Sigmoid colon (tissue), 7 donors: ENCODE measurements at regions of chr13 and their contacts with region 1.

Region 1: GRCh38 chr13:49792550-49793324 is at the start of gene KPNA3:
- DNase-seq: peak; percentile 98
- H3K4me3 ChIP-seq: peak within 1 kb of the TSS; percentile 63 to 100 (median 94)
- H3K27ac ChIP-seq: peak within 1 kb of the TSS; percentile 92 to 99 (median 97)
- H3K4me1 ChIP-seq: peaks cover 0 to 36% (median 31%) of the 10 kb centered on the region in 4 donors
- H3K27me3 ChIP-seq: no peaks in the 10 kb centered on the region
- CTCF ChIP-seq: no peak
- EP300 ChIP-seq: no peak
- POLR2A ChIP-seq: no peak
- total RNA-seq, gene KPNA3: 41.5 to 64.3 (median 46.3) TPM

Region 2: DNA sequence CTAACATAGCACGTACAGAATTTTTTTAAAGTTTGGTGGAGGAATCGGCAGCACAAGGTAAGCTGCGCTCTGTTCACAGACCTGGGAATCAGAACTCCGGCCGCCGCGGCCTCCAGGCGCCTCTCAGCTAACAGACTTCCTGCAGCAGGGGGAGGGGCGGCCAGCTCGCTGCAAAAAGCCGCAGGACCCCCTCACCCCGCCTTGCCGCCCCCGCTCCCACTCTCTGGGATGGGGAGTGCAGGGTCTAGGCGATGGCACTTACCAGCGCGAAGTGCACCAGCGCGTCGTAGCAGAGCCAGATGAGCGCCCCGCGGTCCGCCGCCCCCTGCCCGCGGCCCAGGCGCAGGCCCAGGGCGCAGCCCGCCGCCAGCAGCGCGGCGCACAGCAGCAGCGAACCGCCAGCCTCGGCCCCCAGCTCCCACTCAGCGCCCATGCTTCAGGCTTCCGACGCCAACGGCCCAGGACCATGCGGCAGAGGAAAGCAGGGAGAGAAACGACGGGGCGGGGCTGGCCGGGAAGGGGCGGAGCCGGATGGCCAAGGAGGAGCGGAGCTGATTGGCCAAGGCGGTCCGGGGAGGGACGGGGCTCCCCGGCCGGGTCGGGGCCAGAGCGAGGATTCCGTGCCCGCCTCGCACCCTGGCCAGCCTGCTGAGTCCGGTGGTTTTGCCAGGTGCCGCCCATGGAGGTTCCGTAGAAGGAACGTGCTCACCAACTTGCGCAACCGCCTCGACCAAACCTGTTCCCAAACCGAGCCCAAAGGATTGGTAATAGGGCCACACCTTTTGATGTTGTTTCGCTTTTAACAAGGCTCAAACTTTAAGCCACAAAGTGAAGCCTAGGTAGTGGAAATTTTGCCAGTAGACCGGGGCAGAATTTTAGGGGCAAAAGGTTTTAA is 101.5 kb before region 1 on chr13 and contains the start of gene EBPL:
- intact Hi-C with region 1: loop called (anchors 1 kb)
- DNase-seq: peak; percentile 96
- H3K4me3 ChIP-seq: peak within 1 kb of the TSS; percentile 53 to 94 (median 69)
- H3K27ac ChIP-seq: peak within 1 kb of the TSS; percentile 72 to 88 (median 84)
- H3K4me1 ChIP-seq: peaks cover 0 to 26% (median 13%) of the 10 kb centered on the region in 4 donors
- H3K27me3 ChIP-seq: no peaks in the 10 kb centered on the region
- CTCF ChIP-seq: no peak
- EP300 ChIP-seq: no peak
- POLR2A ChIP-seq: peak; percentile 19 to 52
- total RNA-seq, gene EBPL: 31.0 to 75.9 (median 69.0) TPM

Region 3: DNA sequence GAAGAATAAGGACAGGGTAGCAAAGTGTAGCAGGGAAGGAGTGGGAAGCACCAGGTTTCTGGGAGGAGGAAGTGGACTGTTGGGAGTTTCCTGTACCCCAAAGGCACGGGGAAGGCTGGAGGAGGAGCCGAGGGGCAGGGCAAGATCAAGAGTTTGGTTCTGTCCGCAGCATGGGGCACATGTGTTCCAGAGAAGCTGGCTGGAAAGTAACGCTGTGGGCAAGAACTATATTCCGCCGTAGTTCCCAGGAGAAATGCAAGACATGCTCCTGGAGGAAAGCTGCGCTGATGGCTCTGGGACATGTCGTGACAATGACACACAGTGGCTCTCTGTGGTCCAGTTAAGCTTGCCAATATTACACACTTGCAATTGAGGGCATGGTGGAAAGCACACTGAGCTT is 51.4 kb after region 1 on chr13:
- intact Hi-C with region 1: loop called (anchors 2 kb)
- DNase-seq: no peak
- H3K4me3 ChIP-seq: no peak overlapping the region
- H3K27ac ChIP-seq: no peak overlapping the region
- H3K4me1 ChIP-seq: peaks cover 0 to 8% (median 2%) of the 10 kb centered on the region in 4 donors
- H3K27me3 ChIP-seq: no peaks in the 10 kb centered on the region
- CTCF ChIP-seq: no peak
- EP300 ChIP-seq: no peak
- POLR2A ChIP-seq: no peak

Region 4: GRCh38 chr13:50130123-50130946 is 337.6 kb after region 1 on chr13:
- intact Hi-C with region 1: loop called (anchors 5 kb)
- DNase-seq: peak; percentile 70
- H3K4me3 ChIP-seq: peak overlapping the region; percentile 11 to 45 (median 36)
- H3K27ac ChIP-seq: peak overlapping the region in 2 of 4 donors; percentile 44 to 56
- H3K4me1 ChIP-seq: peaks cover 0 to 44% (median 43%) of the 10 kb centered on the region in 4 donors
- H3K27me3 ChIP-seq: peaks cover 41 to 77% (median 64%) of the 10 kb centered on the region in 3 donors
- CTCF ChIP-seq: no peak
- EP300 ChIP-seq: no peak
- POLR2A ChIP-seq: no peak